Vagina (tissue), 2 donors: ENCODE measurements at regions of chr20 and their contacts with region 1.

Region 1: DNA sequence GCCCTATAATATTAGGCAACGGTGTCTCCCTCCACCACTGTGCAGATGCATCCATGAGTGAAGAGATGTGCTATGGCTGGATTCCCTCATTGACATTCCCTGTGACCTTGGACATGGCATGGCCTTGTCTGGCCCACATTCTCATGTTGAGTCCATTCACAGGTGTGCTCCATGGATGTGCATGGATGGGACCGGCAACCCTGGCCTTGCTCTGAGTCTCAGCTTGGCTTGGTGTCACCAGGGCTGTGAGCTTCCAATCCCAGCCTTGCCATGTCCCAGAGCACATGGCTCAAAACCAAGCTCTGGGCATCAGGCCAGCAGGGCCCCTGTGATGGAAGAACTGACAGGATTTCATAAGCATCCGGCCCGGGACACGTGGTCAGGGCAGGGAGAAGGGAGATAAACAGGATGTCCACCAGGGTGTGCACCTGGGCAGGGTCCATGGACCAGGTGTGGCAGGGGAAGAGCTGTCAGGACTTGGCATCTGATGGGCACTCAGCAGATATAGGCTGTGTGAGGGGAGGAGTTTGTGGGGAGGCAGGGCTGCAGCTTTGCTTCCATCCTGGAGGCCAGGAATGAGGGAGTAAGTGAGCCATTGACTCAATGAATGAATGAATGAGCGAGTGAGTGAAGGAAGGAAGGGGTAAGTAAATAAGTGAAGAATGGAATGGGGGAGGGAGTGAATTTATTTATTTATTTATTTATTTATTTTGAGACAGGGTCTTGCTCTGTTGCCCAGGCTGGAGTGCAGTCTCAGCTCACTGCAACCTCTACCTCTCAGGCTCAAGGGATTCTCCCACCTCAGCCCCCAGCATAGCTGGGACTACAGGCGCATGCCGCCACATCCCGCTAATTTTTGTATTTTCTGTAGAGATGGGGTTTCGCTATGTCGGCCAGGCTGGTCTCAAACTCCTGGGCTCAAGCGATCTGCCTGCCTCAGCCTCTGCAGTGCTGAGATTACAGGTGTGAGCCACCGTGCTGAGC is 15.7 kb downstream of the NRSN2 start:
- DNase-seq: no peak
- H3K4me3 ChIP-seq: no peak overlapping the region
- H3K27ac ChIP-seq: no peak overlapping the region
- H3K4me1 ChIP-seq: peaks cover 16% of the 10 kb centered on the region
- H3K27me3 ChIP-seq: no peaks in the 10 kb centered on the region
- CTCF ChIP-seq: no peak
- POLR2A ChIP-seq: no peak

Region 2: DNA sequence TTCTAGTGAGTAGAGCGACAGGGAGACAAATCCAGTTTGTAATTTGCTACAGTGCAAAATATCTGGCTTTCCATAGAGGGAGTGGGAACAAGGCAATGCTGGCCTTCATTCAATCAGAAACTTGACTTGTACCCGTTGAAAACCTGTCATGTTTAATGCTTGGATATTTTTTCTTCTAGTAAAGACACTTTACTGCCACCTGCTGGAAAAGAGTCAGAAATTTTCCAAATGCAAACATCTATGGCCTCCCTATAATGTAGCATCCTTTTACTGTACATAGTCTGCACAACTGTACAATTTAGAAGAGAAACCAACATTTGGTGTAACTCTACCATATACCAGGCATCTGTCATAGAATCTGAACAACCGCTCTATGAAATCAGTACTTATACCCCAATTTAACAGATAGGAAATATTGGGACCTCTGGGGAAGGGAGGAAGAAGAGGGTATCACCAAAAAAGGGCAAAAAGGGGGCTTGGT is 116.4 kb after region 1 on chr20:
- intact Hi-C with region 1: loop called (anchors 10 kb)
- DNase-seq: no peak
- H3K4me3 ChIP-seq: no peak overlapping the region
- H3K27ac ChIP-seq: no peak overlapping the region
- H3K4me1 ChIP-seq: no peaks in the 10 kb centered on the region
- H3K27me3 ChIP-seq: no peaks in the 10 kb centered on the region
- CTCF ChIP-seq: peak in 2 of 3 experiments; percentile 36 to 47
- POLR2A ChIP-seq: no peak

Region 3: GRCh38 chr20:645318-646106 is 282.9 kb after region 1 on chr20:
- intact Hi-C with region 1: loop called (anchors 10 kb)
- DNase-seq: no peak
- H3K4me3 ChIP-seq: no peak overlapping the region
- H3K27ac ChIP-seq: no peak overlapping the region
- H3K4me1 ChIP-seq: peaks cover 7% of the 10 kb centered on the region
- H3K27me3 ChIP-seq: no peaks in the 10 kb centered on the region
- CTCF ChIP-seq: peak; percentile 59 to 85 (median 84)
- POLR2A ChIP-seq: no peak